ENCODE measurements at regions of chr9 and their contacts with region 1.

Region 1: DNA sequence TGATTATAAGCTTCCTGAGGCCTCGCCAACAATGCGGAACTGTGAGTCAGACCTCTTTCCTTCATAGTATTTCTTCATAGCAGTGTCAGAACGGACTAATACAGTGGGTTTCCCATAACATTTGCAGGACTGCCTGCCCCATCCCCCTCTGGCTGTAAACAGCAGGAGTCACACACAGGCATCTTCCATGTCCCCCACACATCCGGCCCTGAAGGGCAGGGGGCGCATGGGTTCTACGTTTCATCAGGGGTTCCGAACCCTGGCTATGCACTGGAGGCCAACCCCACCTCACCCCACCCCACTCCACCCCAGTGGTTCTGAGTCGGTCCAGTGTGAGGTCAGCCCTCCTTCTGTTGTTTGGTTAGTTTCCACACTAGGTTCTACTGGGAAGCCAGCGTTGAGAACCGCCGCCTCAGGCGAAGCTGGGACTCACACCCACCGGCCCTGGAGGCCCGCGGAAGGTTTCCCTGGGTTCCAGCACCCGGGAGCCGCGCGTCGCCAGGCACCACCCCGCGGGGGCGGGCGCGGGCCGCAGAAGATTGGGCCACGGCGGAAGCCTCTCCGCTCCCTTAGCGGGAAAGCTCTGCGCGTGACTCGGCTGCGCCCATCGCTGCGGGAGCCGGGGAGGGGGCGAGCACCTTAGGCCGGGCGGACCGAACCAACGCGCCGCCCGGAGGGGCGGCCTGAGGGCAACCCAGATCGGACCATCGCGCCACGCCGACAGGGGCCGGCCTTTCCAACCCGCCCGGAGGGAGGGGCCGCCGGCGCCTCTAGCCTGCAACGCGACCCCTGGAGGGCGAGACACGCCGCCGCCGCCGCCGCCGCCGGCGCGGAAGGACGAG is at the start of gene RUSC2:
- DNase-seq: peak; percentile 84 to 85
- ATAC-seq: peak; percentile 84 to 94 (median 86)
- H3K4me3 ChIP-seq: peak within 1 kb of the TSS; percentile 73 to 93 (median 80)
- H3K27ac ChIP-seq: peak within 1 kb of the TSS; percentile 87 to 97 (median 96)
- H3K4me1 ChIP-seq: peaks cover 0 to 45% (median 32%) of the 10 kb centered on the region in 9 donors
- H3K27me3 ChIP-seq: no peaks in the 10 kb centered on the region
- CTCF ChIP-seq: peak; percentile 3 to 64 (median 45)
- total RNA-seq, gene RUSC2: 22.1 to 34.9 (median 28.2) TPM

Region 2: DNA sequence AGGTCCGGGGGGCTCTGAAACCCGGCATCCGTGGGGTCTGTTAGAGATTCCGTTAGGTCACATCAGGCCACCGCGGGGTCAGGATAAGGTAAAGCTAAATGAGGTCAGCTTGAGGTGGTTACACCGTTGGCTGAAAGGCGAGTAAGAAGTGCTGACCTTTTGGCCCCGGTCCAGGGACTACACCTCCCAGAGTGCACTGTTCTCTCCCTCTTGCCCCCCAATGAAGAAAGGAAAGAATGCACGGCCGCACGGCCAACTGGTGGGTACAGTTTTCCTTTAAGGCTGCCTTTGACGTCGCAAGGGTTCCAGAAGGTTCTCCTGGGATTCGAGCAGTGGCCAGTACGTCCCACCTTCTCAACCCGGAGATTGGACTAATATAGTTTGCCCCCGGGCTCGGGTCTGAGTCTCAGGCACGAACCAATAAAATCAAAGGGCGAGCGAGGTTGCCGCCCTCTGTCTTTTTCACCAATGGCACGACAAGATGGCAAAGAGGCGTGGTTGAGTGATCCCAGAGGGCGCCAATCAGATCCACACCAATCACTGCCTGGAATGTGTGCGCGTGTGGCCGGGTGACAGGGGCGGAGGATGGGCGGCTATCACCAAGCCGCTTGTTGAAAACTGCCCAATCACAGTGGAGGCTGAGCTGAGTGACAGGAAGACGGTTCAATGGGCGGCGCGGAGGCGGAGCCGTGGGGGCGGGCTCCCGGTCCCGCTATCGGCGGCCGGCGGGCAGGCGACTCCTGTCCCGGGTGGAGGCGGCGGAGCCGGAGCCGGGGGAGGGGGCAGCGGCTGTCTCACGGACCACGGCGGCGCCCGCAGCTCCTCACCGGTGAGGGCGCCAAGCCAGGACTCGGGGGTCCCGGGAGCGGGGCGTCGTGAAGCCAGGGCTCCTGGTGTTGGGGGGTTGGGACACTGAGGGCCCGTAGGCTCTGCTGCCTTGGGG is 500.3 kb before region 1 on chr9 and contains the start of gene DNAJB5:
- intact Hi-C with region 1: loop called in 2 of 10 experiments (anchors 10 kb)
- DNase-seq: peak; percentile 97 to 100
- ATAC-seq: peak; percentile 80 to 90 (median 84)
- H3K4me3 ChIP-seq: peak within 1 kb of the TSS; percentile 37 to 91 (median 77)
- H3K27ac ChIP-seq: peak within 1 kb of the TSS; percentile 72 to 99 (median 94)
- H3K4me1 ChIP-seq: peaks cover 19 to 62% (median 49%) of the 10 kb centered on the region in 9 donors
- H3K27me3 ChIP-seq: no peaks in the 10 kb centered on the region
- CTCF ChIP-seq: no peak
- total RNA-seq, gene DNAJB5: 49.0 to 206 (median 85.1) TPM

Region 3: GRCh38 chr9:35510745-35511428 is 21.4 kb after region 1 on chr9:
- intact Hi-C with region 1: loop called in 1 of 10 experiments (anchors 2 kb)
- DNase-seq: peak; percentile 81 to 93
- ATAC-seq: peak; percentile 86 to 96 (median 95)
- H3K4me3 ChIP-seq: peak overlapping the region in 3 of 10 donors; percentile 2 to 32 (median 6)
- H3K27ac ChIP-seq: peak overlapping the region; percentile 68 to 91 (median 82)
- H3K4me1 ChIP-seq: peaks cover 3 to 78% (median 34%) of the 10 kb centered on the region in 9 donors
- H3K27me3 ChIP-seq: no peaks in the 10 kb centered on the region
- CTCF ChIP-seq: peak in 8 of 9 donors; percentile 17 to 68 (median 41)

Region 4: GRCh38 chr9:35553670-35554543 is 64.4 kb after region 1 on chr9:
- intact Hi-C with region 1: loop called in 9 of 10 experiments (anchors 1 to 5 kb)
- DNase-seq: peak; percentile 40 to 78
- ATAC-seq: peak; percentile 80 to 91 (median 88)
- H3K4me3 ChIP-seq: no peak overlapping the region
- H3K27ac ChIP-seq: peak overlapping the region in 9 of 10 donors; percentile 11 to 71 (median 47)
- H3K4me1 ChIP-seq: peaks cover 4 to 42% (median 17%) of the 10 kb centered on the region in 9 donors
- H3K27me3 ChIP-seq: no peaks in the 10 kb centered on the region
- CTCF ChIP-seq: peak; percentile 84 to 96 (median 93)

Region 5: DNA sequence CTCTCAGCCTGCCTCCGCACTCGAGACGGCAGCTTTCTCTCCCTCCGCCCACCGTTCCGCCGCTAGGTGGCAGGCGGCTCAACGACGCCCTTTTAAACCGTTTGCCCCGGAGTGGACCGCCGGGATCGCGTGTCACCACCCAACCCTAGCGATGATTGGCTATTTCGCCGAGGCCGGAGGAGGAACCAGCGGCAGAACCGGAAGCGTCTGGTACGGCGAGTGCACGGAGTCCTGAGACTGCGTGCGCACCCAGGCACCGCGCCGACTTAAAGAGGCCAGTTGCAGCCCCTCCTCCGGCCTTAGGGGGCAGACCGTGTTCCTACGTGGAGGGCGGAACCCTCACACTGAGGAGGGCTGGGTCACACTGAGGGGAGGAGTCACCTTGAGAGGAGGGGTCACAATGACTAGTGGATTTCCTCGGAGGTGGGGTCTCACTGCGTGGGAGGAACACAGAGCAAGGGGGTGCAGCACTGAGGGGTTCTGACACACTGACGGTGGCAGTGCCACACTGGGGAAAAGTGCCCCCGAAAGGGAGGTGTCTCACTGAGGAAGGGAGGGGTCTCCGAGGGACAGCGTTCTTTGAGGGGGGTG is 114.5 kb after region 1 on chr9:
- intact Hi-C with region 1: loop called in 2 of 10 experiments (anchors 5 kb)
- DNase-seq: peak; percentile 99 to 100
- ATAC-seq: peak; percentile 92 to 98 (median 96)
- H3K4me3 ChIP-seq: peak overlapping the region; percentile 56 to 93 (median 73)
- H3K27ac ChIP-seq: peak overlapping the region; percentile 72 to 95 (median 92)
- H3K4me1 ChIP-seq: peaks cover 0 to 38% (median 25%) of the 10 kb centered on the region in 9 donors
- H3K27me3 ChIP-seq: no peaks in the 10 kb centered on the region
- CTCF ChIP-seq: peak; percentile 86 to 99 (median 95)

Measured in heart right ventricle (tissue), 16 donors.